Activated B cell treated with CpG ODN at 0.5 μM for 24 hours (primary cell): ENCODE measurements at regions of chr6 and their contacts with region 1.

Region 1: DNA sequence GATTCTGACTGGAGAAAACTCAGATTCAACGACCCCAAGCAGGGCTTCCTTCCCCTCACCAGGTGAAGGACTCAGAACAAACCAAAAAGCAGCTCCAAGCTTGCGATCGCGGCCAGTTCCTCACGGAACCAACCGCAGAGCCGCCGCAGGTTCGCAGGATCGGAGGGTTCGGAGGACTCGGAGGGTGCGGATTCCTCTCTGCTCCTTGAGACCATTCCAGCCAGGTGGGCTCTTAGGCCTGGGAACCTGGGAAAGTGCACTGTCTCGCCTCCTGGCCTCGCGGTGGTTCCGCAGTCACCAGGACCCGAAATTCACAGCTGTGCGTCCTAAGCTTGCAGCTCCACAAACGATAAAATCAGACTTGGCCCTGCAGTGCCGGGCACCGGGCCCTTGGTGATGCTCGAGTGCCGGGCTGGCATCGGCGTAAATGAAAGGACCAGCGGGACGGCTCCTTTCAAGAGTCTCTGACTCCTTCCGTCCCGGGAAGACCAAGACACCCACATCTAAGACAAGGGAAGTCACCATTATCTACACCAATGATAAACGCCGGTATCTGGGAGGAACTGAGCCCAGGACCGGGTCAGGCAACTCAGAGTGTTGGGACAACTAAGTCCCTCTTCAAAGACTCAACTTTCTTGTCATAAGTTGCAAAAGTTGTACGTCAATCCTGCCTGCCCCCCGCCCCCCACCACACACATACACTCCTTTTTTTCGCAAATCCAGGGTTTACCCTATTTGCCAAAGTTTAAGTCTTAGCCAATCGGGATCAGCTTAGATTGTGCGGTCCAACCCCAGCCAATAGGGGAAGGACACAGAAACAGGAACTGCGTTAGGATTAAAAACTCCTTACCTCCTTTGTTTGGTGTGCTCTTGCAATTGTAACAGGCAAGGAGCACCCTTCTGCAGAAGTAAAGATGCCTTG is 69.8 kb upstream of the PRSS16 start:
- DNase-seq: peak; percentile 64
- ATAC-seq: peak; percentile 82
- H3K4me3 Mint-ChIP-seq: peak overlapping the region; percentile 98
- H3K27ac Mint-ChIP-seq: peak overlapping the region; percentile 92
- H3K4me1 Mint-ChIP-seq: peaks cover 12% of the 10 kb centered on the region
- H3K27me3 Mint-ChIP-seq: peaks cover 5% of the 10 kb centered on the region
- CTCF ChIP-seq: no peak

Region 2: GRCh38 chr6:26596579-26597388 is 581.0 kb before region 1 on chr6 and contains the start of gene ABT1:
- CTCF ChIA-PET with region 1: no interaction called
- POLR2A ChIA-PET with region 1: no interaction called
- intact Hi-C with region 1: loop called (anchors 5 kb)
- DNase-seq: peak; percentile 91
- ATAC-seq: peak; percentile 90
- H3K4me3 Mint-ChIP-seq: no peak within 1 kb of the TSS
- H3K27ac Mint-ChIP-seq: no peak within 1 kb of the TSS
- H3K4me1 Mint-ChIP-seq: peaks cover 17% of the 10 kb centered on the region
- H3K27me3 Mint-ChIP-seq: peaks cover 5% of the 10 kb centered on the region
- CTCF ChIP-seq: no peak
- total RNA-seq, gene ABT1: 30.7 and 30.8 TPM in 2 replicates

Region 3: DNA sequence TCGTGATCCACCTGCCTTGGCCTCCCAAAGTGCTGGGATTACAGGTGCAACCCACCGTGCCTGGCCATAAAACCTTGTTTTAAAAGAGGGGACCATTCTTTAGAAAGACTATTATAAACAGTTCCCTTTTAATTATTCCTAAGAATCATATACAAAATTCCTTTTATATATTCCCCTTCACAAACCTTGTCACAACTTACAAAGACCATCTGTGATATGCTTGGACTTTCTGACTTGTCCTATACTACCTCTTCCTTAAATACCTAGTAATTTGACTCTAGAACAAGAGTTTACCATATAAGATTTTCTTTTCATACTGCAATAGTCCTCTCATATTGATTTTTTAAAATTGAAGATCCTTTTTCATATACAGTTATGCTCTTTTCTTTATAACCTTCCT is 66.0 kb before region 1 on chr6:
- CTCF ChIA-PET with region 1: no interaction called
- POLR2A ChIA-PET with region 1: no interaction called
- intact Hi-C with region 1: no loop called
- DNase-seq: no peak
- ATAC-seq: no peak
- H3K4me3 Mint-ChIP-seq: no peak overlapping the region
- H3K27ac Mint-ChIP-seq: no peak overlapping the region
- H3K4me1 Mint-ChIP-seq: no peaks in the 10 kb centered on the region
- H3K27me3 Mint-ChIP-seq: peaks cover 10% of the 10 kb centered on the region
- CTCF ChIP-seq: no peak

Region 4: GRCh38 chr6:27157459-27158315 is 20.1 kb before region 1 on chr6:
- CTCF ChIA-PET with region 1: interaction called, 11 read pairs
- POLR2A ChIA-PET with region 1: interaction called, 4 read pairs
- intact Hi-C with region 1: loop called (anchors 1 kb)
- DNase-seq: peak; percentile 60
- ATAC-seq: peak; percentile 80
- H3K4me3 Mint-ChIP-seq: peak overlapping the region; percentile 89
- H3K27ac Mint-ChIP-seq: peak overlapping the region; percentile 81
- H3K4me1 Mint-ChIP-seq: peaks cover 33% of the 10 kb centered on the region
- H3K27me3 Mint-ChIP-seq: no peaks in the 10 kb centered on the region
- CTCF ChIP-seq: no peak

Region 5: GRCh38 chr6:27205375-27206278 is 27.9 kb after region 1 on chr6:
- CTCF ChIA-PET with region 1: no interaction called
- POLR2A ChIA-PET with region 1: no interaction called
- intact Hi-C with region 1: no loop called
- DNase-seq: no peak
- ATAC-seq: no peak
- H3K4me3 Mint-ChIP-seq: no peak overlapping the region
- H3K27ac Mint-ChIP-seq: no peak overlapping the region
- H3K4me1 Mint-ChIP-seq: peaks cover 15% of the 10 kb centered on the region
- H3K27me3 Mint-ChIP-seq: peaks cover 38% of the 10 kb centered on the region
- CTCF ChIP-seq: no peak

Region 6: DNA sequence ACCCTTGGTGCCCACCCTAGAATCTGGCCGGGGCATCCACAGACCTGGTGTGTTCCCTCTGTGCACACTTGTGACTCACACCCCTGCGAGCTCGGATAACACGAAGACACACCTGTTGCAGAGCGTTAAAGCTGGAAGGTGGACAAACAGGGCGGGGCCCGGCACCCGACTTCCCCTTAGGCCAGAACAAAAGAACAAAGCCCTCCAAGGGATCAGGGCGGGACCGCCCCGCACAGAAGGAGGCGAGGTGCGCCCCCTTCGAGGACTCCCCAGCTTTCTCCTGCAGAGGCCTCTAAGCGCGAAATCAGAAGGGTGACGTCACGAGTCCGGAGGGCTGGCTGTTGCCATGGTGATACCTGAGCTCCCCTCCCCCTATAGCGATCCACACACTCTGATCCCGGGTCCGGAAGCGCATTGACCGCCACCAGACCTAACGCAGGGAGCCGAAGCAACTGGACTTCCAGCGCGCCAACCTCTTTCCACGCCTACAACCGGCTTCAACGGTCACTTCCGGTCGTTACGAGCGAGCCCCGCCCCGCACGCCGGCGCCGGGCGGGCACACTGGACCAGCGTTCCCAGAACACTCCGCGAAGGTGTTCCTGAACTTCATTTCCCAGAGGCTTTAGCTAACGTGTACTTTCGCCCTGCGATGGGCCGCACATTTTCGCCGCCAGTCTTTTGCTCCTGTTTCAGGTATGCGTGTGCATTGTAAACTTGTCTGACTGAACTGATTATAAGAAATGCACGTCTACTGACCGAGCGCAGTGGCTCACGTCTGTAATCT is 295.1 kb after region 1 on chr6 and contains the start of gene ZNF184:
- CTCF ChIA-PET with region 1: interaction called, 3 read pairs
- POLR2A ChIA-PET with region 1: interaction called, 10 read pairs
- intact Hi-C with region 1: no loop called
- DNase-seq: peak; percentile 85
- ATAC-seq: peak; percentile 92
- H3K4me3 Mint-ChIP-seq: peak within 1 kb of the TSS; percentile 95
- H3K27ac Mint-ChIP-seq: peak within 1 kb of the TSS; percentile 95
- H3K4me1 Mint-ChIP-seq: peaks cover 34% of the 10 kb centered on the region
- H3K27me3 Mint-ChIP-seq: no peaks in the 10 kb centered on the region
- CTCF ChIP-seq: no peak
- total RNA-seq, gene ZNF184: 8.1 and 8.6 TPM in 2 replicates

Region 7: DNA sequence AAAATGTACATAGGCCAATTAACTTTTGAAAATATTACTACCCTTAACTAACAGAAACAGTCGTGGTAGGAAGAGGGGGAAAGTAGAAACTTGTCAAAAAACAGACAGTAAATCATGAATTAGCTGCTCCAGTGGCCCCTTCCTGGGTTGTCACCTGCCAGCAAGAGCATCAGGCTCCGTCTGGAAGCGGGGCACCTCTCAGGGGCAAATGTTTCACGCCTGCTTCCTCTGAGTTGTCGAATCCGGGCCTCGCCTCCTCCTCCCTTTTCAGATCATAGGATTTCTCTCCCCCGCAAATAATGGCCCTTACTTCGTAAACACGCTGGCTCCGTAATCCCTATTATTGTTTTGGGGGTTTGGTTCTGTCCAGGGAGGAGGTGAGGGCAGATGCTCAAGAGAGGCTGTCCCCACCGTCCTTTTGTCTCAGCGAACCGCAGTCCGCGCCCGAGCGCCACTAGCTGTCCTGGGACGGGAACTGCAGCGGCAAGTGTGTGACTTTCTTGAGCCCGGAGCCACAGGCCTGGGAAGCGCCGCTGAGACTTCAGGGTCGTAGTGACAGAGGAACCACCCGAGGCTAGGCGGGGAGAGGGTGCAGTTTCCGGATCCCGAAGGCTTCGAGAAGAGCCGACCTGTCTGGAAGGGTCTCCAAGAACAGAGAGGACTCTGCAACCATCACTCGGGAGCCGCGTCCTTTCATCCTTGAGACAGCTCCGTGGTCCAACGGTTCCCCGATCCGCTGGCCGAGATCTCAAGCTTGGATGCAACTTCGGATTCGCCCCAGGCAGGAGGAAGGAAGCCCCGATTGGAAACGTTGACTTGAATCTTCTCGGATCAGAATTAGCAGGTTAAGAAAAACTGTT is 509.6 kb after region 1 on chr6:
- CTCF ChIA-PET with region 1: no interaction called
- POLR2A ChIA-PET with region 1: no interaction called
- intact Hi-C with region 1: loop called (anchors 5 kb)
- DNase-seq: peak; percentile 63
- ATAC-seq: peak; percentile 73
- H3K4me3 Mint-ChIP-seq: peak overlapping the region; percentile 93
- H3K27ac Mint-ChIP-seq: peak overlapping the region; percentile 90
- H3K4me1 Mint-ChIP-seq: peaks cover 16% of the 10 kb centered on the region
- H3K27me3 Mint-ChIP-seq: peaks cover 4% of the 10 kb centered on the region
- CTCF ChIP-seq: no peak

Region 8: DNA sequence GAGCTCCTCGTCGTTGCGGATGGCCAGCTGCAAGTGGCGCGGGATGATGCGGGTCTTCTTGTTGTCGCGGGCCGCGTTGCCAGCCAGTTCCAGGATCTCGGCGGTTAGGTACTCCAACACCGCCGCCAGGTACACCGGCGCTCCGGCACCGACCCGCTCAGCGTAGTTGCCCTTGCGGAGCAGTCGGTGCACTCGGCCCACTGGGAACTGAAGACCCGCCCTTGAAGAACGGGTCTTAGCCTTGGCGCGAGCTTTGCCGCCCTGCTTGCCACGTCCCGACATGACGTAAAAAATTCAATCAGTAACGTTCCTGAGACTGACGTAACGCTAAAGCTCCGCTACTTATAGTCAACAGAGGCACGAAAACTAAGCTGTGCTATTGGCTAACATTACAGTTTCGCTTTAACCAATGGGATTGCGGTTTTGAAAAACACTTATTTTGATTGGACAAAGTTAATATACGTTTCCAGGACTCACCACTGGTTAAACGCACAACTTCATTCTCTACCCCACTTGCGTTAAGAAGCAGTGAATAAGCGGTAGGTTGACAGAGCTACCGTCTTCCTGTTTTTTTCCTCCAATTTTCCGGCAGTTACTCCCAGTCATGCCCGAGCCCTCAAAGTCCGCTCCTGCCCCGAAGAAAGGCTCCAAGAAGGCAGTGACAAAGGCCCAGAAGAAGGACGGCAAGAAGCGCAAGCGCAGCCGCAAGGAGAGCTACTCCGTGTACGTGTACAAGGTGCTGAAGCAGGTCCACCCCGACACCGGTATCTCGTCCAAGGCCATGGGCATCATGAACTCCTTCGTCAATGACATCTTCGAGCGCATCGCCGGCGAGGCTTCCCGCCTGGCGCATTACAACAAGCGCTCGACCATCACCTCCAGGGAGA is 660.6 kb after region 1 on chr6:
- CTCF ChIA-PET with region 1: no interaction called
- POLR2A ChIA-PET with region 1: interaction called, 13 read pairs
- intact Hi-C with region 1: loop called (anchors 1 kb)
- DNase-seq: peak; percentile 73
- ATAC-seq: peak; percentile 76
- H3K4me3 Mint-ChIP-seq: no peak overlapping the region
- H3K27ac Mint-ChIP-seq: no peak overlapping the region
- H3K4me1 Mint-ChIP-seq: peaks cover 18% of the 10 kb centered on the region
- H3K27me3 Mint-ChIP-seq: no peaks in the 10 kb centered on the region
- CTCF ChIP-seq: no peak

Region 9: DNA sequence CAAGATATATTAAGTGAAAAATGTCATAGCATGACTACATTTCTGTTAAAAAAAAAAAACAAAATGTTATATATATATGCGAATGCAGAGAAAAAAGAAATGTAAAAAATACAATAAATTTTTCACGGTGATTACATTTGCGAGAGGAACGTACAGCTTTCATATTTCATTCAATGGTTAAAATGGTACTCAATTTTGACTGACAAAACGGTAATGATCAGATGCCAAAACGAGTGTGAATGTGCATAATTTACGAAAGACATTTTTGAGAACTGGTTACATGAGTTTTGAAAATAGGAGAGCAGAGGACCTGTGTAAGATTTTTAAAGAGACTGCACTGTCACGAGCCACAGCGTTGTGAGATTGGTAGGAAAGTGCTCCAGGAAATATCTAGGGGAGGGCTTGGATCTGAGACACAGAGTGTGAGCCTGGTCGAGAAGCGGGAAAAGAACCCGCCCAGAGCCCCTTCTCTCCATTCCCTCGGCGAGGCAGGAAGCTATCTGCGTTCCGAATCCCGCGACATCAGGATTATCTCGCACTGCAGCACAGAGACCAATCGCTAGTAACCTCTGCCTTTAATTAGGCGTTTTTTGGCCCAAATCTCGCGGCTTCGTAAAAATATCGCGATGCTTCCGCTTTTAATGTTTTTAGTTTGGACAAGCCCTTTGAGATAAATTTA is 1717.5 kb after region 1 on chr6:
- CTCF ChIA-PET with region 1: no interaction called
- POLR2A ChIA-PET with region 1: interaction called, 6 read pairs
- intact Hi-C with region 1: loop called (anchors 2 kb)
- DNase-seq: peak; percentile 66
- ATAC-seq: peak; percentile 66
- H3K4me3 Mint-ChIP-seq: peak overlapping the region; percentile 97
- H3K27ac Mint-ChIP-seq: peak overlapping the region; percentile 99
- H3K4me1 Mint-ChIP-seq: peaks cover 23% of the 10 kb centered on the region
- H3K27me3 Mint-ChIP-seq: peaks cover 3% of the 10 kb centered on the region
- CTCF ChIP-seq: no peak